ENCODE measurements at regions of chr19 and their contacts with region 1.

Region 1: GRCh38 chr19:39765091-39766076 is 13.3 kb upstream of the LEUTX start:
- DNase-seq: peak; percentile 13 to 77
- H3K4me3 ChIP-seq: no peak overlapping the region
- H3K27ac ChIP-seq: no peak overlapping the region
- H3K4me1 ChIP-seq: peaks cover 0 to 12% (median 5%) of the 10 kb centered on the region in 4 experiments; a peak in 5 of 7 replicates
- H3K27me3 ChIP-seq: no peaks in the 10 kb centered on the region
- CTCF ChIP-seq: peak; percentile 72 to 80 (median 72)
- EP300 ChIP-seq: no peak
- POLR2A ChIP-seq: no peak
- RAD21 ChIP-seq: peak in 1 of 2 experiments; percentile 49; a peak in 3 of 4 replicates

Region 2: GRCh38 chr19:39524495-39524894 is 240.9 kb before region 1 on chr19:
- CTCF ChIA-PET with region 1: no interaction called
- POLR2A ChIA-PET with region 1: no interaction called
- DNase-seq: no peak
- H3K4me3 ChIP-seq: no peak overlapping the region
- H3K27ac ChIP-seq: no peak overlapping the region
- H3K4me1 ChIP-seq: peaks cover 0 to 2% (median 0%) of the 10 kb centered on the region in 4 experiments; a peak in 1 of 7 replicates
- H3K27me3 ChIP-seq: no peaks in the 10 kb centered on the region
- CTCF ChIP-seq: no peak
- EP300 ChIP-seq: no peak
- POLR2A ChIP-seq: no peak
- RAD21 ChIP-seq: no peak

Region 3: DNA sequence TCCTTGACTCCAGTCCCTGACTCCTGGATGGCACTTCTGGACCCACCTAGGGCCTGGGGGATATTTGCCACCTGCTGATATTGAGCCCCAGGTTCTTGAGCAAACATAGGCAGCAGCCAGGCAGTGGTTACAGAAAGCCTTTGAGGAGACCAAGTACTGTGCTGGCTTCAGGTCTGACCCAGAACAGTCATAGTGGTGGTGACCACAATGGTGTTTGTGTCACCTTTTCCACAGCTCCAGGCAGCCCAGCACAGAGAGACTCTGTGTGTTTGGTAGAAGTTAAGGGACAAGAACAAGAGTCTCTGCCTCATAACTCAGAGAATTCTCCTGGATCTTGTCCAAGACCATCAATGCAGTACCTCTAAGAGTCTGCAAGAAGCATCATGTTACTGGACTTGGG is 13.0 kb before region 1 on chr19:
- CTCF ChIA-PET with region 1: interaction called, 10 read pairs
- POLR2A ChIA-PET with region 1: no interaction called
- DNase-seq: no peak
- H3K4me3 ChIP-seq: no peak overlapping the region
- H3K27ac ChIP-seq: no peak overlapping the region
- H3K4me1 ChIP-seq: no peaks in the 10 kb centered on the region
- H3K27me3 ChIP-seq: no peaks in the 10 kb centered on the region
- CTCF ChIP-seq: no peak
- EP300 ChIP-seq: no peak
- POLR2A ChIP-seq: no peak
- RAD21 ChIP-seq: no peak

Region 4: GRCh38 chr19:39778763-39779162 is 13.4 kb after region 1 on chr19 and contains the start of gene LEUTX:
- CTCF ChIA-PET with region 1: interaction called, 12 read pairs
- POLR2A ChIA-PET with region 1: interaction called, 4 read pairs
- DNase-seq: no peak
- H3K4me3 ChIP-seq: no peak within 1 kb of the TSS
- H3K27ac ChIP-seq: no peak within 1 kb of the TSS
- H3K4me1 ChIP-seq: no peaks in the 10 kb centered on the region
- H3K27me3 ChIP-seq: no peaks in the 10 kb centered on the region
- CTCF ChIP-seq: no peak
- EP300 ChIP-seq: no peak
- POLR2A ChIP-seq: no peak
- RAD21 ChIP-seq: no peak
- total RNA-seq, gene LEUTX: not detected in 2 replicates